HEK293T (cell line): ENCODE measurements at regions of chr1 and their contacts with region 1.

Region 1: GRCh38 chr1:29181413-29182225 is at the start of gene SRSF4:
- DNase-seq: peak; percentile 100

Region 2: DNA sequence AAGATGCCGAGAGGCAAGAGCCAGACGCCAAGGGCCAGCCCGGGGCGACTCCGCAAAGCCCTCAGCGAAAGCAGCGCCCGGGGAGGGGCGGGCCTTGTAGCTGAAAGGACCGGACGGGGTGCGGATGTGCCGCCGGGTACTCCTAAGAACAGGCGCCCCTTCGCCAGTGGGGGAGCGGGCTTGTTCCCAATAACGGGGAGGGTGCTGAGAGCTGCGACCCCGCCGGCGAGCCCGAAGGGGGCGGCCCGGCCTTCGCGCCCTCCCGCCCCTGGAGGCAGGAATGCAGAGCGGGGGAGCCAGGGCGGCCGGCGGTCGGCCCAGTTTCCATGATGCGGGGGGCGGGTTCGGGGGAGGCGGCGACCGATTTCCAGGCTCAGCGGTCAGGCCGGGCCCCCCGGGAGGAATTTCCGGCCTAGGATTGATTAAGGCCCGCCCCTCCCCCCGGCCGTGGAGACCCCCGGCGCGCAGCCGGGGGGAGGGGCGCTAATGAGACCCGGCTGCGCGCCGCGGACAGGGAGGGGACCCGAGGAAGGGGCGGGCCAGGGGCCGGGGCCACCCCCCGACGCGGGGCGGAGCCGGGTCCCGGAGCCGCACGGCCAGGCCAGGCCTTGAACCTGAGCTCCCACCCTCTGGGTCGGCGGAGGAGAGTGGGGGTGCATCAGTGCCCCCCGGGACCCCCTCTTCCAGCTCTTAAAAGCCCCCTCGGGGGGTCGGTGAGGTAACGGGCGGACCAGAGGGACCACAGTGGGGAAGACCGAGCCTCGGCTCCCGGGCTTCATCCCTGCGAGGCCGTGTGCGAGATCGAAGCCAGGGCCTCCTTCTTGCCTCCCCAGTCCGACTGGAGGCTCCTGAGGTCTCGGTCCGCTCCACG is 57.0 kb before region 1 on chr1:
- CTCF ChIA-PET with region 1: interaction called, 3 read pairs
- POLR2A ChIA-PET with region 1: interaction called, 13 read pairs
- DNase-seq: peak; percentile 93

Region 3: GRCh38 chr1:29162025-29162424 is 19.6 kb before region 1 on chr1:
- CTCF ChIA-PET with region 1: interaction called, 3 read pairs
- POLR2A ChIA-PET with region 1: interaction called, 27 read pairs
- DNase-seq: no peak

Region 4: GRCh38 chr1:29192220-29192619 is 10.6 kb after region 1 on chr1:
- CTCF ChIA-PET with region 1: interaction called, 6 read pairs
- POLR2A ChIA-PET with region 1: interaction called, 29 read pairs
- DNase-seq: no peak

Region 5: GRCh38 chr1:29202584-29203340 is 21.1 kb after region 1 on chr1:
- CTCF ChIA-PET with region 1: interaction called, 10 read pairs
- POLR2A ChIA-PET with region 1: interaction called, 29 read pairs
- DNase-seq: peak; percentile 97

Region 6: GRCh38 chr1:29324771-29325668 is 143.4 kb after region 1 on chr1:
- CTCF ChIA-PET with region 1: no interaction called
- POLR2A ChIA-PET with region 1: no interaction called
- DNase-seq: peak; percentile 43

Region 7: DNA sequence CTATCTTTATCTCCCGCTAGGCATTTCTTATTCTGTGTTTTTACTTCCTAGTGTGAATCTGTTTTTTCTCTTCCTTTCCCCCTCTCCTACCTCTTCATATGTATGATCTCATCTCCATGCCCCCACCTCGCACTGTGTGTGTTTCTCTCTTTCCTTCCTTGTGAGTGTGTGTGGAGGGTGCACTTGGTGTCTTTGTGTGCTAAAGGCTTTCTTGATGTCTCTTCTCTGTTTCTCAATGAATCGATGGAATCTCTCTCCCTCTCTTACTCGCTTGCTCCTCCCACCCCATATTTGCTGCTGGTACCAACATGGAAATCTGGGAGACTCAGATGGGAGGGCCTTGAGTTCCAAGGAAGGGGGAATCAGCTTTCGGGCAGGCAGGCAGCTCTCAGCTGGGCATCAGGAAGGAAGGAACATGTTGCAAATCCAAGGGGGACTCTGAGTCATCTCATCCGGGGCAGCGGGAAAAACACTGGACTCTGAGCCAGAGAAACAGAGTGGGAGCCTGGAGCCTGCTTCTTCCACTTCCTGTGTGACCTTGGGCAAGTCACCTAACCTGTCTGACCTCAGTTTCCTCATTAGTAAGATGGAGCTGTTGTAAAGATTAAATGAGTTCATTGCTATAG is 202.2 kb after region 1 on chr1:
- CTCF ChIA-PET with region 1: no interaction called
- POLR2A ChIA-PET with region 1: no interaction called
- DNase-seq: no peak